ENCODE measurements at regions of chr12 and their contacts with region 1.

Region 1: DNA sequence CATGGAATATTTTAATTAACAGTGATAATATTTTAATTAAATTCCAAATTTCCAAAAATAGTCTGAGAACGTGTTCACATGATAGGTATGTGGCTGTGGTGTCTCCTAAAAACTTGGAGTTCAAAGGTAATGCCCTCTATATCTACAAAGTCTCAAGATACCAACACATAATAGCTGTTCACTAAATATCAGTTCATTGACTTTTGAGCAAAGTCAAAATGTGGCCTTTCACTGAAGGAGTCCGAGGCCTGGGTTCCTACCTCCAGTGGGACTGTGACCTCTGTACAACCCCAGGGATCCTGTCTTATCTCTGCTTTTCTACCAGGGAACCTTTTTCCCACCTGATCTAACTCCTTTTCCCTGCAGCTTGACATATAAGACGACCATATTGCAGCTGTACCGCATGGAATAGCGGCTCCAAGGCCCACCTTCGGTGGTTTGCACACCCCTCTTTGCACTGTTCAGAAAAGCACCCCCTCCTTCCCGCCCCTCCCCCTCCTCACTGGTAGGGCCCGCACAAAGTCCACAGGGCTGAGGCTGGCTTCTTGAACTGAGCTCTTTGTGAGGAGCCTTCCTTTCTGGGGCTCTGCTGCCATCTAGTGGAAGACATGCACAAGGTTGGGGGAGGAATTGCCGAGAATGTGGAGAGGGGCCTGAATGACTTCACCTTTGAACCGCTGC is 3.1 kb downstream of the CCND2 start:
- DNase-seq: peak; percentile 92
- H3K4me3 Mint-ChIP-seq: peak overlapping the region; percentile 95
- H3K27ac Mint-ChIP-seq: peak overlapping the region; percentile 63
- H3K4me1 Mint-ChIP-seq: peaks cover 55% of the 10 kb centered on the region
- H3K27me3 Mint-ChIP-seq: no peaks in the 10 kb centered on the region

Region 2: GRCh38 chr12:3885277-3886094 is 391.2 kb before region 1 on chr12:
- CTCF ChIA-PET with region 1: interaction called, 80 read pairs
- POLR2A ChIA-PET with region 1: interaction called, 3 read pairs
- DNase-seq: peak; percentile 68
- H3K4me3 Mint-ChIP-seq: no peak overlapping the region
- H3K27ac Mint-ChIP-seq: peak overlapping the region; percentile 14
- H3K4me1 Mint-ChIP-seq: peaks cover 23% of the 10 kb centered on the region
- H3K27me3 Mint-ChIP-seq: peaks cover 7% of the 10 kb centered on the region

Region 3: GRCh38 chr12:3988519-3989448 is 287.9 kb before region 1 on chr12:
- CTCF ChIA-PET with region 1: interaction called, 31 read pairs
- POLR2A ChIA-PET with region 1: no interaction called
- DNase-seq: peak; percentile 49
- H3K4me3 Mint-ChIP-seq: peak overlapping the region; percentile 16
- H3K27ac Mint-ChIP-seq: peak overlapping the region; percentile 90
- H3K4me1 Mint-ChIP-seq: peaks cover 25% of the 10 kb centered on the region
- H3K27me3 Mint-ChIP-seq: peaks cover 2% of the 10 kb centered on the region

Region 4: DNA sequence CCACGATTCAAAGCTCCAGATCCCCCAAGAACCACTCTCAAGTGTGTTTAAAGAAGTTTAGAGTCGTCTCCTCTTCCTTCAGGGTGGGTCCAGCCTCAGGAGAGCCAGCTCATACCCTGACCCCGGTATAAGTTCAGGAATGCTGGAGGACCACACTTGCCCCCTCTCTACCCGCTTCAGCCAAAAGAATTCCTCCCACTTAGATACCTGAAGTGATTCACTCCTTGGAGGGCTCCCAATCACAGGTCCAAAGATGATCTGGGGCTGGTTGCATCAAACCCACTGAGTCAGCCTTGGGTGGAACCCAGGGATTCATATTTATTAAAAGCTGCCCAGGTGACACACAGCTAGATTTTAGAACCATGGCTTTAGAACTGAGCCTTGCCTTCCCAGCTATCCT is 269.9 kb before region 1 on chr12:
- CTCF ChIA-PET with region 1: interaction called, 47 read pairs
- POLR2A ChIA-PET with region 1: no interaction called
- DNase-seq: no peak
- H3K4me3 Mint-ChIP-seq: no peak overlapping the region
- H3K27ac Mint-ChIP-seq: no peak overlapping the region
- H3K4me1 Mint-ChIP-seq: peaks cover 3% of the 10 kb centered on the region
- H3K27me3 Mint-ChIP-seq: no peaks in the 10 kb centered on the region

Region 5: DNA sequence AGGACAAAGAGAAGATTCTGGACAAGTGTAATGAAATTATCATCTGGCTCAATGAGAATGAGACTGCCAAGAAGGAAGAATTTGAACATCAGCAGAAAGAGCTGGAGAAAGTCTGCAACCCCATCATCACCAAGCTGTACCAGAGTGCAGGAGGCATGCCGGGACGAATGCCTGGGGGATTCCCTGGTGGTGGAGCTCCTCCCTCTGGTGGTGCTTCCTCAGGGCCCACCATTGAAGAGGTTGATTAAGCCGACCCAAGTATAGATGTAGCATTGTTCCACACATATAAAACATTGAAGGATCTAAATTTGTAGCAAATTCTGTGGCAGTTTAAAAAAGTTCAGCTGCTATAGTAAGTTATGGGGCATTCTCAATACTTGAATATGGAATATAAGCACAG is 177.4 kb before region 1 on chr12:
- CTCF ChIA-PET with region 1: interaction called, 4 read pairs
- POLR2A ChIA-PET with region 1: interaction called, 10 read pairs
- DNase-seq: no peak
- H3K4me3 Mint-ChIP-seq: no peak overlapping the region
- H3K27ac Mint-ChIP-seq: no peak overlapping the region
- H3K4me1 Mint-ChIP-seq: peaks cover 8% of the 10 kb centered on the region
- H3K27me3 Mint-ChIP-seq: peaks cover 13% of the 10 kb centered on the region

Region 6: GRCh38 chr12:4118017-4118510 is 158.6 kb before region 1 on chr12:
- CTCF ChIA-PET with region 1: interaction called, 16 read pairs
- POLR2A ChIA-PET with region 1: interaction called, 4 read pairs
- DNase-seq: peak; percentile 28
- H3K4me3 Mint-ChIP-seq: peak overlapping the region; percentile 58
- H3K27ac Mint-ChIP-seq: peak overlapping the region; percentile 90
- H3K4me1 Mint-ChIP-seq: peaks cover 67% of the 10 kb centered on the region
- H3K27me3 Mint-ChIP-seq: no peaks in the 10 kb centered on the region

Region 7: GRCh38 chr12:4289231-4289878 is 12.7 kb after region 1 on chr12:
- CTCF ChIA-PET with region 1: interaction called, 16 read pairs
- POLR2A ChIA-PET with region 1: interaction called, 3 read pairs
- DNase-seq: no peak
- H3K4me3 Mint-ChIP-seq: no peak overlapping the region
- H3K27ac Mint-ChIP-seq: peak overlapping the region; percentile 27
- H3K4me1 Mint-ChIP-seq: peaks cover 92% of the 10 kb centered on the region
- H3K27me3 Mint-ChIP-seq: no peaks in the 10 kb centered on the region

Measured in activated CD4-positive, alpha-beta T cell treated with anti-CD3 and anti-CD28 coated beads, Interleukin-2, amount 10 ng/mL, durations not matched to agents 7 days and 5 days (primary cell).